A673 (cell line): ENCODE measurements at regions of chr18 and their contacts with region 1.

Region 1: GRCh38 chr18:66495844-66496243 is 108.0 kb downstream of the CDH19 start:
- DNase-seq: peak; percentile 76
- H3K4me3 ChIP-seq: no peak overlapping the region
- H3K27ac ChIP-seq: no peak overlapping the region
- H3K4me1 ChIP-seq: no peaks in the 10 kb centered on the region
- H3K27me3 ChIP-seq: no peaks in the 10 kb centered on the region
- CTCF ChIP-seq: peak; percentile 70

Region 2: DNA sequence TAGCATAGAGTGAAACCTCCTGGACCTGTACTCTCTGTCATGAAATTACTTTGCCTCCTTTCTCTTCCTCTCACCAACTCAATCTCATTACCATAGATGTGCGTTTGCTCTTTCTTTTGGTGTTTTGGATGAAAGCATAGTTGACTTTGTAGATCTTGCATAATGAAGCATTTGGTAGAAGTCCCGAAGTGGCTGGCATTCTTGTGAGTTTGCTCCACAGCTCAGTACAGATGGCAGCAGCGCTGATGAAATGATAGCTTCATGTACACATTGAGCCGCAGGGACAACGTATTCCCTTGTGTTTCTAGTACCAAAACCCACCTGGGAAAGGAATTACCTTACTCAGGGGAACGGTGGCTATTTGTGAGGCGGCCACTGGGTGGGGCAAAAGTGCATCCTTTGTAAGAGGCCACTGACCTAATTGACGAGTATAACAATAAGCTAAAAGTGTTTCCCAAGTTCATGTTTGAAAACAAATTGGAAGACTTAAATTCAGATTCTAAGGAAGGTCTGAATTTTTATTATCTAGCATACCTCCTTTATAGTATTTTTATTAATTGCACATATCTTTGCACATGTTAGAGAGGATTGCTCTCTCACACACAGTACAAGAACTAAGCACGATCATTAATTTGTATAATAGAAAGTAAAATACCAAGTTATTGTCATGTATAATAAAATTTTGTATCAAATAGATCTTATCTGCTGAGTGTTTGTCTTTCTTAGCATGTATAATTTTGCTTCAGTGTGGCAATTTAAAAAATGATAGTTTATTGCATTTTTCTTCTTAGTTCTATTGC is 770.4 kb before region 1 on chr18:
- CTCF ChIA-PET with region 1: no interaction called
- POLR2A ChIA-PET with region 1: no interaction called
- intact Hi-C with region 1: loop called (anchors 10 kb)
- DNase-seq: peak; percentile 51
- H3K4me3 ChIP-seq: no peak overlapping the region
- H3K27ac ChIP-seq: no peak overlapping the region
- H3K4me1 ChIP-seq: peaks cover 19% of the 10 kb centered on the region
- H3K27me3 ChIP-seq: no peaks in the 10 kb centered on the region
- CTCF ChIP-seq: peak; percentile 60

Region 3: DNA sequence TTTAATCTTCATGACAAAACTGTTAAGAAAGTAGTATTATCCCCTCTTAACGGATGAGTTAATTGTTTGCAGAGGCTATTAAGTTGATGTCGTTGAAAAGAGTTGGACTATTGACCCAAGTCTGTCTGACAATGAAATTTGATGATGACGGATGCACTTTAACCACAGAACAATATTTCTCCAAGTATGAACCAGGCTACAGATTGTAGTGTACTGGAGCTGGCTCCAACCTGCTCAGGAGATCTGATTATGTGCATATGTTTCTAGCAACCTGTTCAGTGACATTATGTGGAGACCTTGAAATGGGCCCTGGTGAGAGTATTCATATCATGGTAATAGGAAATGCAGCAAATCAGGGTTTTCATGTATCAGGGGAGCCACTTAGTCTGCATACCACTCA is 570.9 kb before region 1 on chr18:
- CTCF ChIA-PET with region 1: no interaction called
- POLR2A ChIA-PET with region 1: no interaction called
- intact Hi-C with region 1: no loop called
- DNase-seq: no peak
- H3K4me3 ChIP-seq: no peak overlapping the region
- H3K27ac ChIP-seq: no peak overlapping the region
- H3K4me1 ChIP-seq: no peaks in the 10 kb centered on the region
- H3K27me3 ChIP-seq: no peaks in the 10 kb centered on the region
- CTCF ChIP-seq: no peak

Region 4: GRCh38 chr18:65938592-65939372 is 557.1 kb before region 1 on chr18:
- CTCF ChIA-PET with region 1: interaction called, 6 read pairs
- POLR2A ChIA-PET with region 1: no interaction called
- intact Hi-C with region 1: loop called (anchors 5 kb)
- DNase-seq: peak; percentile 91
- H3K4me3 ChIP-seq: no peak overlapping the region
- H3K27ac ChIP-seq: peak overlapping the region; percentile 2
- H3K4me1 ChIP-seq: peaks cover 18% of the 10 kb centered on the region
- H3K27me3 ChIP-seq: no peaks in the 10 kb centered on the region
- CTCF ChIP-seq: peak; percentile 79

Region 5: DNA sequence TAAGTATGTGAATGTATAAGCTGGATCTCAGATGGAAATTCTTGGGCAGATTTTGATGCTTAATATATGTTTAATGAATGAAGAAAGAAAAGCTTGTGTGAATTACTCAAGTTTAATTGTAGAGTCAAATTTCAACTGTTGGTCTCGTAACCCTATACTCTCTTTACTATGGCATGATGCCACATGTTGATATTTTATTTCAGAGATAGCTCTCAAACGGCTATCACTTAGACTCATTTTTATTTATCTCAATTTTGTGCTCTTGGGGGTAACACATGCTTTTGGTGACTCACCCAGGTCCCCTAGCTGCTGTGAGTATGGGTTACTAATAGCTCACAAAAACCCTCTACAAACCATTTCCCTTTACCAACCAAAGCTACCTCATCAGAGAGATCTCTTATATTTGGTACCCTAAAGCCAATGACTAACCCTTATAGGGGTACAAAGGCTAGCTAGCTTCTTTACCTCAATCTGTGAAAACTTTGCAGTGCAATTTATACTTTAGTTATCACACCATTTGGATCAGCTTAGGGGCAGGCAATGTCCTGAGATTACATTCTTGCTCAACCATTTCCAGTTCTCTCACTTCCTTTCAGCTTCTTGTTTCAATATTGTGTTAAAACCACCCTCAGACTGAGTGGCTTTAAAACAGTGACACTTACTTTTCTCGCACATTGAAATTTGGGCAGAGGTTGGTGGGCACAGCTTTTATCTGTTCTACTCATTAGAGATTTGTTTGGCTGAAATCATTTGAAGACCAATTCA is 504.7 kb before region 1 on chr18:
- CTCF ChIA-PET with region 1: interaction called, 3 read pairs
- POLR2A ChIA-PET with region 1: no interaction called
- intact Hi-C with region 1: loop called (anchors 5 kb)
- DNase-seq: peak; percentile 84
- H3K4me3 ChIP-seq: no peak overlapping the region
- H3K27ac ChIP-seq: peak overlapping the region; percentile 96
- H3K4me1 ChIP-seq: peaks cover 48% of the 10 kb centered on the region
- H3K27me3 ChIP-seq: no peaks in the 10 kb centered on the region
- CTCF ChIP-seq: no peak

Region 6: DNA sequence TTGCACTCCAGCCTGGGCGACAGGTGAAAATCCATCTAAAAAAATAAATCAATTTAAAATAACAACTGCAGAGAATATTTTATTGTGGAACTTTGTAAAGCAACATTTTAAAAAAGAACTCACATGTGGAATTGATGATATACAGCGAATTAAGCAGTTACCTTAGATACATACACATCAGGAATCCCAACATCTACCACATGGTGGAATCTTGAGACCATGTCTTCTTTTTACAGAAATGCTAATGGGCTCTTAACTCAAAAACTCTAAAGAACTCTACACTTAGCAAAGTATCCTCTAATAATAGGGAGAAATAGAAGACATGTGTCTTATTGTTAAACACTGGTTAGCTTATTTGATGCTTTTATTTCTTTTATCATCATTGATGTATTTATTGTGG is 371.4 kb before region 1 on chr18:
- CTCF ChIA-PET with region 1: no interaction called
- POLR2A ChIA-PET with region 1: no interaction called
- intact Hi-C with region 1: loop called (anchors 10 kb)
- DNase-seq: peak; percentile 54
- H3K4me3 ChIP-seq: no peak overlapping the region
- H3K27ac ChIP-seq: no peak overlapping the region
- H3K4me1 ChIP-seq: no peaks in the 10 kb centered on the region
- H3K27me3 ChIP-seq: no peaks in the 10 kb centered on the region
- CTCF ChIP-seq: peak; percentile 52; the same call in 1 of the 2 replicates

Region 7: DNA sequence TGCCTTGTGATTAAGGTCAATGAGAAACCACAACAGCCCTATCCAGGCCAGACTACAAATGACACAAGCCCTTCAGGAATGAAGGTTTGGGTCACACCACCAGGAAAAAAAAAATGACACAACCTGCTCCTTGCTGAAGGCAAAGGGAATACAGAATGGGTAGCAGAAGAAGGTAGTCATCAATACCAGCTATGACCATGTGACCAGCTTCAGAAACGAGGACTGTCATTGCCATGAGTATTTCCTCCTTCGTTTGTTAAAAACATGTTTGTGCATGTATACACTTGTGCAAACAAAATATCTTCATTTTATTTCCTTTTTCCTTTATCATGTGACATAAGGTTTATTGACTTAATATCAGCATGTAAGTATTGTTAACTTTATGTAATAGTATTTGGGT is 118.6 kb before region 1 on chr18:
- CTCF ChIA-PET with region 1: no interaction called
- POLR2A ChIA-PET with region 1: no interaction called
- intact Hi-C with region 1: no loop called
- DNase-seq: no peak
- H3K4me3 ChIP-seq: no peak overlapping the region
- H3K27ac ChIP-seq: no peak overlapping the region
- H3K4me1 ChIP-seq: no peaks in the 10 kb centered on the region
- H3K27me3 ChIP-seq: no peaks in the 10 kb centered on the region
- CTCF ChIP-seq: no peak

Region 8: DNA sequence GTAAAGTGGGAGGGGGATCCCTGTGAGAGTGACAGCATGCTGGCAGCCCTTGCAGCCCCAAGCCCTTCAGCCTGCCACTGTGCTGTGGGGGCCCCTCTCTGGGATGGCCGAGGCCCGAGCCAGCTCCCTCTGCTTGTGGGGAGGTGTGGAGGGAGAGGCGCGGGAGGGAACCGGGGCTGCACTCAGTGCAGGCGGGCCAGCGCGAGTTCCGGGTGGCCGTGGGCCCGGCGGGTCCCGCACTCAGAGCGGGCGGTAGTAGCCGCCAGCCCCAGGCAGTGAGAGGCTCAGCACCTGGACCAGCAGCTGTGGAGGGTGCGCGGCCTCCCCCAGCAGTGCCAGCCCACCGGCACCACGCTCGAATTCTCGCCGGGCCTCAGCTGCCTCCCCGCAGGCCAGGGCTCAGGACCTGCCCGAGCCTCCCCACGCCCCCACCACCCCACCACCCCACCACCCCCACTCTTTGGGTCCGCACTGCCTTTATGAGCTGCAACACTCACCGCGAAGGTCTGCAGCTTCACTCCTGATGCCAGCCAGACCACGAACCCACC is 100.1 kb before region 1 on chr18:
- CTCF ChIA-PET with region 1: no interaction called
- POLR2A ChIA-PET with region 1: no interaction called
- intact Hi-C with region 1: no loop called
- DNase-seq: no peak
- H3K4me3 ChIP-seq: no peak overlapping the region
- H3K27ac ChIP-seq: no peak overlapping the region
- H3K4me1 ChIP-seq: no peaks in the 10 kb centered on the region
- H3K27me3 ChIP-seq: no peaks in the 10 kb centered on the region
- CTCF ChIP-seq: no peak